CD8-positive, alpha-beta T cell (primary cell): ENCODE measurements at regions of chr22 and their contacts with region 1.

Region 1: GRCh38 chr22:24433813-24434470 is 6.5 kb downstream of the ADORA2A start:
- DNase-seq: no peak
- ATAC-seq: peak; percentile 53
- H3K4me3 ChIP-seq: peak overlapping the region in 1 of 2 experiments; percentile 6
- H3K4me3 Mint-ChIP-seq: peak overlapping the region; percentile 73
- H3K27ac ChIP-seq: peak overlapping the region; percentile 55 to 92
- H3K27ac Mint-ChIP-seq: peak overlapping the region; percentile 94
- H3K4me1 ChIP-seq: peaks cover 99% of the 10 kb centered on the region
- H3K4me1 Mint-ChIP-seq: peaks cover 90% of the 10 kb centered on the region
- H3K27me3 ChIP-seq: no peaks in the 10 kb centered on the region
- H3K27me3 Mint-ChIP-seq: no peaks in the 10 kb centered on the region
- CTCF ChIP-seq: no peak

Region 2: DNA sequence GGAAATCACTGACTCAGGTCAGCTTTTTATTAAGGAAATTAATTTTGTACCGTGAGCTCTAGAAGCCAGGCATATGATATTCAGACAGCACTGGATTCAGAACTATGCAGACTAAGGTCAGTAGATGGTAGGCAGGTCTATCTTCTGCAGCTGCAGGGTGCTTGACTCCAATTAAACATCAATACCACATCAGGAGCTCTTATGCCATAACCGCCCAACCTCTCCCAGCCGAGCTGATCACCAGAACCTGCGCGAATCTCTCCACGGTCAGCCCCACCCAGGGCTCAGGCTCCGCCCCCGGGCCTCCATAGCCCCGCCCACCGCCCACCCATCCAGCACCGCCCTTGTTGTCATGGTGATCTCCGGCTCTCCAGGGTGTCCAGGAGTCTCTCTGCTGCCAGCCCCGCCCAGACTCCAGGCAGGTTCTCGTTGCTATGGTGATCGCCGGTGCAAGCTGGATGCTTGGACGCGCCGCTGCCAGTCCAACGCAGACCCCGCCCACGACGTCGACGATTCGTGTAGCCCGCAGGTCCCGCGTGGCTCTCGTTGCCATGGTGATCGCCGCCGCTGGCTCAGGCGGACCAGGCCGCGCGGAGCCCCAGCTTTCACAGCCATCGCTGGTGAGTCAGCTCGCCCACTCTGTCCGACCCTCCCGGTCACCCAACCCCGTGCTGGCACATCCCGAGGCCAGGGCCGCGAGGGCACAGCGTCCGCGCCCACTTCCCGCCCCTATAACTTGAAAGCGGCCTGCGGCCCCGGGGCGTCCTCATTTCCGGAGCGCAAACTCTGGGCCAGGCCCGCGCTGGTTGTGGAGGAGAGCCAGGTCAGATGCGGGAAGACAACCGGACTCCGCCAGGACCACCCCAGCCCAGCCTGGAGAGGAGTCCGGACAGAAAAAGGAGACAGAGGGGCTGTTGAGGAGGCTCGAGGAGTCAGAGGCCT is 1288.7 kb before region 1 on chr22 and contains the start of gene RAB36:
- CTCF ChIA-PET with region 1: no interaction called
- POLR2A ChIA-PET with region 1: no interaction called
- intact Hi-C with region 1: loop called in 1 of 2 experiments (anchors 5 kb)
- DNase-seq: peak; percentile 73 to 97 (median 89)
- ATAC-seq: peak; percentile 50
- H3K4me3 ChIP-seq: peak within 1 kb of the TSS; percentile 35 to 40
- H3K4me3 Mint-ChIP-seq: peak within 1 kb of the TSS; percentile 78
- H3K27ac ChIP-seq: peak within 1 kb of the TSS; percentile 71 to 87
- H3K27ac Mint-ChIP-seq: peak within 1 kb of the TSS; percentile 86
- H3K4me1 ChIP-seq: peaks cover 55% of the 10 kb centered on the region
- H3K4me1 Mint-ChIP-seq: peaks cover 46% of the 10 kb centered on the region
- H3K27me3 ChIP-seq: no peaks in the 10 kb centered on the region
- H3K27me3 Mint-ChIP-seq: no peaks in the 10 kb centered on the region
- CTCF ChIP-seq: no peak
- total RNA-seq, gene RAB36: 0.52 to 0.64 TPM

Region 3: GRCh38 chr22:24466716-24467328 is 32.9 kb after region 1 on chr22:
- CTCF ChIA-PET with region 1: no interaction called
- POLR2A ChIA-PET with region 1: no interaction called
- intact Hi-C with region 1: no loop called
- DNase-seq: no peak
- ATAC-seq: no peak
- H3K4me3 ChIP-seq: no peak overlapping the region
- H3K4me3 Mint-ChIP-seq: no peak overlapping the region
- H3K27ac ChIP-seq: no peak overlapping the region
- H3K27ac Mint-ChIP-seq: no peak overlapping the region
- H3K4me1 ChIP-seq: no peaks in the 10 kb centered on the region
- H3K4me1 Mint-ChIP-seq: peaks cover 4% of the 10 kb centered on the region
- H3K27me3 ChIP-seq: no peaks in the 10 kb centered on the region
- H3K27me3 Mint-ChIP-seq: no peaks in the 10 kb centered on the region
- CTCF ChIP-seq: no peak

Region 4: GRCh38 chr22:24503137-24503842 is 69.3 kb after region 1 on chr22:
- CTCF ChIA-PET with region 1: interaction called, 13 read pairs
- POLR2A ChIA-PET with region 1: no interaction called
- intact Hi-C with region 1: no loop called
- DNase-seq: peak; percentile 28 to 79 (median 66)
- ATAC-seq: peak; percentile 88
- H3K4me3 ChIP-seq: no peak overlapping the region
- H3K4me3 Mint-ChIP-seq: no peak overlapping the region
- H3K27ac ChIP-seq: no peak overlapping the region
- H3K27ac Mint-ChIP-seq: no peak overlapping the region
- H3K4me1 ChIP-seq: peaks cover 6% of the 10 kb centered on the region
- H3K4me1 Mint-ChIP-seq: peaks cover 9% of the 10 kb centered on the region
- H3K27me3 ChIP-seq: no peaks in the 10 kb centered on the region
- H3K27me3 Mint-ChIP-seq: no peaks in the 10 kb centered on the region
- CTCF ChIP-seq: peak; percentile 57